ENCODE measurements at regions of chr2 and their contacts with region 1.

Region 1: GRCh38 chr2:55010149-55010591 is 40.1 kb downstream of the RTN4 start:
- DNase-seq: peak; percentile 59
- H3K4me3 Mint-ChIP-seq: peak overlapping the region; percentile 69
- H3K27ac Mint-ChIP-seq: peak overlapping the region; percentile 68
- H3K4me1 Mint-ChIP-seq: peaks cover 65% of the 10 kb centered on the region
- H3K27me3 Mint-ChIP-seq: no peaks in the 10 kb centered on the region
- CTCF ChIP-seq: no peak

Region 2: GRCh38 chr2:54927085-54927750 is 83.0 kb before region 1 on chr2:
- CTCF ChIA-PET with region 1: no interaction called
- intact Hi-C with region 1: no loop called
- DNase-seq: no peak
- H3K4me3 Mint-ChIP-seq: no peak overlapping the region
- H3K27ac Mint-ChIP-seq: no peak overlapping the region
- H3K4me1 Mint-ChIP-seq: no peaks in the 10 kb centered on the region
- H3K27me3 Mint-ChIP-seq: peaks cover 25% of the 10 kb centered on the region
- CTCF ChIP-seq: no peak

Region 3: GRCh38 chr2:54979321-54980041 is 30.7 kb before region 1 on chr2:
- CTCF ChIA-PET with region 1: interaction called, 4 read pairs
- intact Hi-C with region 1: loop called (anchors 2 kb)
- DNase-seq: peak; percentile 58
- H3K4me3 Mint-ChIP-seq: no peak overlapping the region
- H3K27ac Mint-ChIP-seq: peak overlapping the region; percentile 51
- H3K4me1 Mint-ChIP-seq: peaks cover 49% of the 10 kb centered on the region
- H3K27me3 Mint-ChIP-seq: no peaks in the 10 kb centered on the region
- CTCF ChIP-seq: no peak

Region 4: DNA sequence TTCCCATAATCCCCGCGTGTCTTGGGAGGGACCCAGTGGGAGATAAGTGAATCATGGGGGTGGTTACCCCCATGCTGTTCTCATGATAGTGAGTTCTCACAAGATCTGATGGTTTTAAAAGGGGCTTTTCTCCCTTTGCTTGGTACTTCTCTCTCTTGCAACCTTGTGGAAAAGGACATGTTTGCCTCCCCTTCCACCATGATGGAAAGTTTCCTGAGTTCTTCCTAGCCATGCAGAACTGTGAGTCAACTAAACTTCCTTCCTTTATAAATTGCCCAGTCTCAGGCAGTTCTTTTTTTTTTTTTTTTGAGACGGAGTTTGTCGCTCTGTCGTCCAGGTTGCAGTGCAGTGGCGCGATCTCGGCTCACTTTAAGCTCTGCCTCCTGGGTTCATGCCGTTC is 66.6 kb after region 1 on chr2:
- CTCF ChIA-PET with region 1: interaction called, 10 read pairs
- intact Hi-C with region 1: no loop called
- DNase-seq: no peak
- H3K4me3 Mint-ChIP-seq: no peak overlapping the region
- H3K27ac Mint-ChIP-seq: no peak overlapping the region
- H3K4me1 Mint-ChIP-seq: no peaks in the 10 kb centered on the region
- H3K27me3 Mint-ChIP-seq: no peaks in the 10 kb centered on the region
- CTCF ChIP-seq: no peak

Measured in Calu3 (cell line).